GM12878 (cell line): ENCODE measurements at regions of chr1 and their contacts with region 1.

Region 1: GRCh38 chr1:203340112-203340804 is 10.7 kb downstream of the FMOD start:
- DNase-seq: no peak
- ATAC-seq: peak; percentile 86
- H3K4me3 ChIP-seq: no peak overlapping the region
- H3K27ac ChIP-seq: no peak overlapping the region
- H3K4me1 ChIP-seq: no peaks in the 10 kb centered on the region
- H3K27me3 ChIP-seq: peaks cover 0 to 6% of the 10 kb centered on the region in 2 experiments; a peak in 1 of 4 replicates
- CTCF ChIP-seq: peak; percentile 84 to 95 (median 92)
- EP300 ChIP-seq: no peak
- POLR2A ChIP-seq: no peak
- RAD21 ChIP-seq: peak; percentile 96

Region 2: GRCh38 chr1:203290261-203291089 is 49.8 kb before region 1 on chr1:
- CTCF ChIA-PET with region 1: interaction called, 52 read pairs
- POLR2A ChIA-PET with region 1: no interaction called
- RAD21 ChIA-PET with region 1: interaction called, 56 read pairs
- SMC1A ChIA-PET with region 1: interaction called, 25 read pairs
- in situ Hi-C with region 1: no loop called
- intact Hi-C with region 1: no loop called
- DNase-seq: no peak
- ATAC-seq: peak; percentile 72
- H3K4me3 ChIP-seq: peak overlapping the region; percentile 65
- H3K27ac ChIP-seq: peak overlapping the region; percentile 100
- H3K4me1 ChIP-seq: peaks cover 58% of the 10 kb centered on the region
- H3K27me3 ChIP-seq: no peaks in the 10 kb centered on the region
- CTCF ChIP-seq: no peak
- EP300 ChIP-seq: peak; percentile 42 to 60; a peak in 3 of 4 replicates
- POLR2A ChIP-seq: peak; percentile 86
- RAD21 ChIP-seq: no peak

Region 3: GRCh38 chr1:203351037-203352013 is 11.1 kb after region 1 on chr1 and contains the start of gene FMOD:
- CTCF ChIA-PET with region 1: interaction called, 184 read pairs
- POLR2A ChIA-PET with region 1: interaction called, 5 read pairs
- RAD21 ChIA-PET with region 1: interaction called, 4 read pairs
- SMC1A ChIA-PET with region 1: interaction called, 4 read pairs
- in situ Hi-C with region 1: no loop called
- intact Hi-C with region 1: no loop called
- DNase-seq: no peak
- ATAC-seq: peak; percentile 64
- H3K4me3 ChIP-seq: no peak within 1 kb of the TSS
- H3K27ac ChIP-seq: no peak within 1 kb of the TSS
- H3K4me1 ChIP-seq: no peaks in the 10 kb centered on the region
- H3K27me3 ChIP-seq: peaks cover 0 to 4% of the 10 kb centered on the region in 2 experiments; a peak in 1 of 4 replicates
- CTCF ChIP-seq: peak; percentile 5 to 15 (median 12); a peak in 1 of 6 replicates
- EP300 ChIP-seq: no peak
- POLR2A ChIP-seq: no peak
- RAD21 ChIP-seq: no peak
- polyA plus RNA-seq, gene FMOD: not detected

Region 4: DNA sequence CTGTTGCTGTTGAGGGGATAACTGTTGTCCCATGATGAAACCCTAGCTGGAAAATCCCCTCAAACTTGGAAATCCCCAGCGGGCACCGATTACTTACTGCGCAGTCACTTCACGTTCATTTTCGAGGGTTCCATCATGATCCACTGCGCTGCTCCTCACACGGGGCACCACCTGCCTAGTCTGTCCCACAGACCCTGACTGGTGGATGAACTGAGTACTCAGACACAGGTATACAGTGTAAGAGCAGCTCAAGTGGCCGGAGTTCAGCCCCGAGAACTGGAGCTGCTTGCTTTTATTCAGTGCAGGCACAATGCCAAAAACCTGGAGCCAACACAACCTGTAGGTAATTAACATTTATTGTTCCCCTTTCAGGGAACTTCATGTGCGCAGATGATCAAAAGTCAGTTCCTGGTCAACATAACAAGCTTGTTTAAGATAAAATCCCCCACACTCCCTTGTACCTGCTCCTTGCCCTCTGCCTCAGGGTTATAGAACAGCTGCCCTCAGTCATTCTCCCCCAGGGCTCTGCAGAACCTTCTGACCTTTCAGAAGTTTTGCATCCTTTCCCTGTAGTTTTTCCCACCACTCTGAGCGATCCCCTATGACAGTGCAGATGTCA is 88.8 kb after region 1 on chr1:
- CTCF ChIA-PET with region 1: interaction called, 61 read pairs
- POLR2A ChIA-PET with region 1: interaction called, 3 read pairs
- RAD21 ChIA-PET with region 1: interaction called, 12 read pairs
- SMC1A ChIA-PET with region 1: interaction called, 14 read pairs
- in situ Hi-C with region 1: no loop called
- intact Hi-C with region 1: no loop called
- DNase-seq: peak; percentile 70
- ATAC-seq: peak; percentile 97
- H3K4me3 ChIP-seq: no peak overlapping the region
- H3K27ac ChIP-seq: peak overlapping the region; percentile 70
- H3K4me1 ChIP-seq: peaks cover 13% of the 10 kb centered on the region
- H3K27me3 ChIP-seq: no peaks in the 10 kb centered on the region
- CTCF ChIP-seq: no peak
- EP300 ChIP-seq: peak in 1 of 2 experiments; percentile 48; a peak in 1 of 4 replicates
- POLR2A ChIP-seq: 0 out of 2 replicates have a peak, but pooled peaks have one; percentile 22
- RAD21 ChIP-seq: no peak

Region 5: GRCh38 chr1:203463469-203464062 is 123.3 kb after region 1 on chr1:
- CTCF ChIA-PET with region 1: interaction called, 28 read pairs
- POLR2A ChIA-PET with region 1: no interaction called
- RAD21 ChIA-PET with region 1: interaction called, 5 read pairs
- SMC1A ChIA-PET with region 1: interaction called, 19 read pairs
- in situ Hi-C with region 1: no loop called
- intact Hi-C with region 1: no loop called
- DNase-seq: no peak
- ATAC-seq: peak; percentile 59
- H3K4me3 ChIP-seq: no peak overlapping the region
- H3K27ac ChIP-seq: no peak overlapping the region
- H3K4me1 ChIP-seq: no peaks in the 10 kb centered on the region
- H3K27me3 ChIP-seq: no peaks in the 10 kb centered on the region; a peak in 2 of 4 replicates
- CTCF ChIP-seq: peak; percentile 5 to 41 (median 13); a peak in 3 of 6 replicates
- EP300 ChIP-seq: no peak
- POLR2A ChIP-seq: no peak
- RAD21 ChIP-seq: no peak

Region 6: GRCh38 chr1:203493901-203494300 is 153.6 kb after region 1 on chr1 and contains the start of gene OPTC:
- CTCF ChIA-PET with region 1: interaction called, 323 read pairs
- POLR2A ChIA-PET with region 1: no interaction called
- RAD21 ChIA-PET with region 1: interaction called, 141 read pairs
- SMC1A ChIA-PET with region 1: interaction called, 152 read pairs
- in situ Hi-C with region 1: loop called (anchors 5 kb)
- intact Hi-C with region 1: no loop called
- DNase-seq: no peak
- ATAC-seq: no peak
- H3K4me3 ChIP-seq: no peak within 1 kb of the TSS
- H3K27ac ChIP-seq: no peak within 1 kb of the TSS
- H3K4me1 ChIP-seq: no peaks in the 10 kb centered on the region
- H3K27me3 ChIP-seq: peaks cover 0 to 8% of the 10 kb centered on the region in 2 experiments; a peak in 3 of 4 replicates
- CTCF ChIP-seq: no peak
- EP300 ChIP-seq: no peak
- POLR2A ChIP-seq: no peak
- RAD21 ChIP-seq: no peak
- polyA plus RNA-seq, gene OPTC: not detected